AG04450 (cell line): ENCODE measurements at regions of chr6 and their contacts with region 1.

Region 1: GRCh38 chr6:36340618-36341454 is 4.1 kb upstream of the BNIP5 start:
- DNase-seq: no peak
- H3K4me3 ChIP-seq: 0 out of 2 replicates have a peak overlapping the region, but pooled peaks have one; percentile 4
- H3K27ac ChIP-seq: no peak overlapping the region
- H3K27me3 ChIP-seq: peaks cover 43% of the 10 kb centered on the region
- CTCF ChIP-seq: peak; percentile 96

Region 2: DNA sequence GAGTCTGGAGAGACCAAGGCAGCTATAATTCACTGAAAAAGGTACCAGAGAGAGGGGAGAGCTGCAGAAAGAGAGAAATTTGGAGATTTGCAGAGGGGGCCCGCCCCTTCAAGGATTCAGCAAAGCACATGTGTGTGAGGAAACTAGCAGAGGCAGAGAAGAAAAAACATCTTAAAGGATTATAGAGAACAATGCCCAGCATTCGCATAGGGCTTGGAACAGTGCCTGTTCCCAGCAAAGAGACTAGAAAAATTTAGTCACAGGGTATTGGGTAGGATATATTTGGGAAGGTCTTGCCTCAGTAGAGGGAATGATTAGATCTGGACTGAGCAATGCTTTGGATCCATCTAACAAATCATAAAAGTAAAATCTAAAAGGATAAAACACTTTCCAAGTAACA is 463.9 kb before region 1 on chr6:
- CTCF ChIA-PET with region 1: no interaction called
- POLR2A ChIA-PET with region 1: no interaction called
- DNase-seq: no peak
- H3K4me3 ChIP-seq: no peak overlapping the region
- H3K27ac ChIP-seq: no peak overlapping the region
- H3K27me3 ChIP-seq: no peaks in the 10 kb centered on the region
- CTCF ChIP-seq: no peak

Region 3: DNA sequence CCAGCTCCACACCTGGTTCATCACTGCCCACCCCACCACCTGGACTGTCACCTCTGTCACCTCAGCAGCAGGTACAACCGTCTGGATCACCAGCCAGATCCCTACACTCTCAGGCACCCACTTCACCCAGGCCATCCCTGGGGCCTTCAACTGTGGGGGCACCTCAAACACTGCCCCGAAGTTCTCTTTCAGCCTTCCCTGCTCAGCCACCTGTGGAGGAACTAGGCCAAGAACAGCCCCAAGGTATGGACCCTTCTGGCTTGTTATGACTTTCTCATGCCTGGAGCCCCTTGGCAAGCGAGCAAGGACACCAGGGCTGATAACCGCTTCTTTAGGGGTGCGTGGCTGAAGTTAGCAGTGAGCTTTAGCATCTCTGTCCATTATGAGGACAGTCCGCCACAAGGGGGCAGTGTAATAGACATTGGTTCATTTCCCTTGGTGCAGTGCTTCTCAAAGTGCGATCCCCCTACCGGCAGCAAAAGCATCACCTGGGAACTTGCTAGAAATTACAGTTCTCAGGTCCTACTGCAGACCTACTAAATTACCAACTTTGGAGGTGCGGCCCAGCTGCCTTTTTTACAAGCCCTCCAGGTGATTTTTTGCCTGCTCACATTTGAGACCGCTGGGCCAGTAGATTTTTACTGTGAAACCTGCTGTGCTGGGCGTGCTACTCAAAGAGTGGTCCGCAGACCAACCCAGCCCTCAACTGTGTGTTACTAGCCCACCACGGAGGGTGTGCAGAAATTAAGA is 38.4 kb before region 1 on chr6:
- CTCF ChIA-PET with region 1: interaction called, 13 read pairs
- POLR2A ChIA-PET with region 1: no interaction called
- DNase-seq: peak; percentile 72
- H3K4me3 ChIP-seq: no peak overlapping the region
- H3K27ac ChIP-seq: no peak overlapping the region
- H3K27me3 ChIP-seq: peaks cover 8% of the 10 kb centered on the region
- CTCF ChIP-seq: peak; percentile 95

Region 4: DNA sequence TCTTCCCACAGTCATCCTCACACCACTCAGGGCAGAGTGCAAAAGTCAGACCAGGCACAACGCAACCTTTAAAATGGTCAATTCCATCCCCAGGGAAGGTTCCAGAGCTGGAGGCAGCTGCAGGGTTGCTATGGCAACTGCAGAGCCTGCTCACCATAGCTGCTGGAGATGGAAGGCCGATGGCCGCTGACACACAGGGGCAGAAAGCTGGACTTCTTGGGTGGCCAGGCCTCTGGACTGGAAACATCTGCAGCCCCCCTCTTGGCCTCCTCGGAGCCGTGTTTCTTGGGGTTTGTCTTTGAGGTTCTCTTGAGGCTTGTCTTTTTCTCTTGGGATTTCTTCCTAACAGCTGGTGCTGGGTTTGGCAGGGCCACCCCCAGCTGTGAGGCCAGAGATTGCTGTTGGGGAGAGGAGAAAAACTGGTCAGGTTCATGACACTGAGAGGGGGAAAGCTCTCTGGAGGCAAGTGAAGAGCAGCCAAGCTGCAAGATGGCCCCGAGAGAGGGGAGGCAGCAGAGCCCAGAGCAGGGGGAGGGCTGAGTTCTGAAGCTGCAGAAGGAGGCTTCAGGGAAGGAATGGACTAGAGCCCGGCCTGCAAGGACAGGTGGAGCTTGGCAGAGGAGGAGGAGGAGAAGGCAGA is 14.4 kb before region 1 on chr6:
- CTCF ChIA-PET with region 1: interaction called, 10 read pairs
- POLR2A ChIA-PET with region 1: no interaction called
- DNase-seq: no peak
- H3K4me3 ChIP-seq: no peak overlapping the region
- H3K27ac ChIP-seq: no peak overlapping the region
- H3K27me3 ChIP-seq: peaks cover 59% of the 10 kb centered on the region
- CTCF ChIP-seq: no peak

Region 5: GRCh38 chr6:36350681-36351571 is 10.1 kb after region 1 on chr6:
- CTCF ChIA-PET with region 1: interaction called, 17 read pairs
- POLR2A ChIA-PET with region 1: no interaction called
- DNase-seq: peak; percentile 39
- H3K4me3 ChIP-seq: no peak overlapping the region
- H3K27ac ChIP-seq: peak overlapping the region; percentile 47
- H3K27me3 ChIP-seq: peaks cover 14% of the 10 kb centered on the region
- CTCF ChIP-seq: no peak

Region 6: DNA sequence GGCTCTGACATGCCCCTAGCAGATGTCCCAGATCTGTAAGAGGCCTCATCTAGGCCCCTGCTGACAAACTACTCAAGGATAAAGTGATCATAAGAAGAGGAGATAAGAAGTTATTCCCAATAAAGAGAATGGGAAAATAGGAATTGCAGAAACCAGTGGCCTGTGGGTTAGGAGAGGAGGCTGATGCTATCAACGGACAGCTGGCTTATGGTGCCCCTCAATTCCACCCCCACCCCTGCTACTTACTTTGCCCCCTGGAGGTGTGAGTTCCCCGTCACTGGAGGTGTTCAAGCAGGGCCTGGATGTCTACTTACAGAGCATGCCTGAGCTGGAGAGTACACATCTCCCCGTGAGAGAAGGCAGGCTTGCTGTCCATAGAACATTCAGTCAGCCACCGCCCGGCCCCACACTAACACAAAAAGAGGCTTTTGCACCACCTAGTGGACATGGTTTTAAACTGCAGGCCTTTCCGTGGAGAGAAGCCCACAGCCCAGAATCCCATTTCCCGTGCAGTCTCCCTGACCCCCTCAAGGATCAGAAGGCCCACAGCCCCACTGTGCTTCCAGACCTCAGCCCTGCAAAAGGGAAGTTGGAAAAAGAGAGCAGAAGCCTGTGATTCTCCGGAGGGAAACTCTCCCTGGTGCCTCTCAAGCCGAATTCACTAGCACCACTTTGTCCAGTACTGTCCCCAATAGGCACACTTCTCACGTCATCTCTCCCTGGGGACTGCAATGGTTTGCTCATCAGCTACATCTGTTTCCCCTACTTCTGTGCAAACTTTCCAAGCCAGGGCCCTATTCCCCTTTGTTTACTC is 19.6 kb after region 1 on chr6:
- CTCF ChIA-PET with region 1: interaction called, 59 read pairs
- POLR2A ChIA-PET with region 1: no interaction called
- DNase-seq: no peak
- H3K4me3 ChIP-seq: no peak overlapping the region
- H3K27ac ChIP-seq: no peak overlapping the region
- H3K27me3 ChIP-seq: peaks cover 12% of the 10 kb centered on the region
- CTCF ChIP-seq: peak; percentile 78